ENCODE measurements at regions of chr2 and their contacts with region 1.

Region 1: GRCh38 chr2:218033590-218034496 is 31.0 kb upstream of the TNS1 start:
- DNase-seq: no peak
- ATAC-seq: peak; percentile 23
- H3K4me3 ChIP-seq: no peak overlapping the region
- H3K27ac ChIP-seq: no peak overlapping the region
- H3K4me1 ChIP-seq: peaks cover 25% of the 10 kb centered on the region
- H3K27me3 ChIP-seq: no peaks in the 10 kb centered on the region; a peak in 1 of 4 replicates
- CTCF ChIP-seq: no peak
- EP300 ChIP-seq: no peak
- POLR2A ChIP-seq: no peak
- RAD21 ChIP-seq: no peak

Region 2: DNA sequence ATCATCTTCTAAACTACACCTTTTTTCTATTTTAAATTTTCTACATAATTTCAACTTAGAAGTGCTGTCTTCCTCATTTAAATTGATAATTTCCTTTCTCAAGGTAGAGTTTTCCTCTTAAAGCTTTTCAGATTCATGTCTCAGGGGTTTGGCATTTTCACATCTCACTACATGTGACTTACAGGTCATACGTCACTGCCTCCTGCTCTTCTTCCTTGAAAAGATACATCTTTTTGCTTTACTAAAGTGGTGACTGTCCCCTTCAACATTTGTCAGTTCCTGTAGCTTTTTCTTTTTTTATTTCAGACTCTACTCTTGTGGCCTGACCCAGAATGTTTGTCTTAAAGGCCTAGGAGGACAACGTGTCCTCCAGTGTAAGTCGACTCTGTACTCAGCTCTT is 18.1 kb after region 1 on chr2:
- CTCF ChIA-PET with region 1: interaction called, 10 read pairs
- POLR2A ChIA-PET with region 1: no interaction called
- RAD21 ChIA-PET with region 1: no interaction called
- SMC1A ChIA-PET with region 1: no interaction called
- in situ Hi-C with region 1: no loop called
- intact Hi-C with region 1: no loop called
- DNase-seq: no peak
- ATAC-seq: no peak
- H3K4me3 ChIP-seq: no peak overlapping the region
- H3K27ac ChIP-seq: no peak overlapping the region
- H3K4me1 ChIP-seq: peaks cover 6% of the 10 kb centered on the region; the same call in 1 of the 2 replicates
- H3K27me3 ChIP-seq: no peaks in the 10 kb centered on the region
- CTCF ChIP-seq: no peak
- EP300 ChIP-seq: no peak
- POLR2A ChIP-seq: no peak
- RAD21 ChIP-seq: no peak

Region 3: GRCh38 chr2:218063486-218063885 is 29.6 kb after region 1 on chr2:
- CTCF ChIA-PET with region 1: interaction called, 12 read pairs
- POLR2A ChIA-PET with region 1: no interaction called
- RAD21 ChIA-PET with region 1: no interaction called
- SMC1A ChIA-PET with region 1: interaction called, 3 read pairs
- in situ Hi-C with region 1: no loop called
- intact Hi-C with region 1: loop called (anchors 1 kb)
- DNase-seq: peak; percentile 60
- ATAC-seq: peak; percentile 94
- H3K4me3 ChIP-seq: no peak overlapping the region
- H3K27ac ChIP-seq: no peak overlapping the region
- H3K4me1 ChIP-seq: peaks cover 15% of the 10 kb centered on the region
- H3K27me3 ChIP-seq: no peaks in the 10 kb centered on the region; a peak in 1 of 4 replicates
- CTCF ChIP-seq: no peak
- EP300 ChIP-seq: no peak
- POLR2A ChIP-seq: no peak
- RAD21 ChIP-seq: no peak

Region 4: GRCh38 chr2:218081063-218081462 is 47.2 kb after region 1 on chr2:
- CTCF ChIA-PET with region 1: no interaction called
- POLR2A ChIA-PET with region 1: no interaction called
- RAD21 ChIA-PET with region 1: no interaction called
- SMC1A ChIA-PET with region 1: no interaction called
- in situ Hi-C with region 1: no loop called
- intact Hi-C with region 1: no loop called
- DNase-seq: peak; percentile 61
- ATAC-seq: peak; percentile 98
- H3K4me3 ChIP-seq: no peak overlapping the region
- H3K27ac ChIP-seq: peak overlapping the region; percentile 65
- H3K4me1 ChIP-seq: peaks cover 35% of the 10 kb centered on the region
- H3K27me3 ChIP-seq: no peaks in the 10 kb centered on the region; a peak in 1 of 4 replicates
- CTCF ChIP-seq: no peak
- EP300 ChIP-seq: peak in 1 of 2 experiments; percentile 92; a peak in 2 of 4 replicates
- POLR2A ChIP-seq: no peak
- RAD21 ChIP-seq: no peak

Measured in GM12878 (cell line).